PC-9 (cell line): ENCODE measurements at regions of chr2 and their contacts with region 1.

Region 1: GRCh38 chr2:186503848-186504606 is 18.0 kb downstream of the ZC3H15 start:
- DNase-seq: no peak
- H3K4me3 ChIP-seq: no peak overlapping the region
- H3K27ac ChIP-seq: no peak overlapping the region
- H3K4me1 ChIP-seq: no peaks in the 10 kb centered on the region
- H3K27me3 ChIP-seq: no peaks in the 10 kb centered on the region
- CTCF ChIP-seq: peak; percentile 75

Region 2: DNA sequence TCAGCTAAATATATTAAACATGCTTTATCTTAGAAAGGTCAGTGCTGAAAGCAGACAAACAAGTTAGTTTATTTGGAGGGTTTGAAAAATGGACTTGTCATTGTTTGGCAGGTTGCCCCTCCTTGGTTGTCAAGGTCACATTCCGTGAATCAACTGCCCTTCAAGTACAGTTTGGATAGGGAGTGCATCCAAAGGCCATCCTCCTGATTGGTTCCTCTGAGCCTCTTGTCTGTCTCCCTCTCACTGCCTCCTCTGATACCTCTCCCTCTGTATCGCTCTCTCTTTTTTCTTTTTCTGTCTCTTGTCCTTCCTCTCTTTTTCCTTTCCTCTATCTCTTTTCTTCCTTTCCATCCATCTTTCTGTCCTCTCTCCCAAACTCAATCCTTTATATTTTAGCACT is 91.2 kb after region 1 on chr2:
- CTCF ChIA-PET with region 1: no interaction called
- POLR2A ChIA-PET with region 1: no interaction called
- intact Hi-C with region 1: no loop called
- DNase-seq: no peak
- H3K4me3 ChIP-seq: no peak overlapping the region
- H3K27ac ChIP-seq: no peak overlapping the region
- H3K4me1 ChIP-seq: peaks cover 15% of the 10 kb centered on the region
- H3K27me3 ChIP-seq: no peaks in the 10 kb centered on the region
- CTCF ChIP-seq: no peak

Region 3: GRCh38 chr2:186641807-186642321 is 137.8 kb after region 1 on chr2:
- CTCF ChIA-PET with region 1: interaction called, 4 read pairs
- POLR2A ChIA-PET with region 1: interaction called, 4 read pairs
- intact Hi-C with region 1: loop called (anchors 1 kb)
- DNase-seq: peak; percentile 38 to 66
- H3K4me3 ChIP-seq: no peak overlapping the region
- H3K27ac ChIP-seq: 0 out of 2 replicates have a peak overlapping the region, but pooled peaks have one; percentile 22
- H3K4me1 ChIP-seq: no peaks in the 10 kb centered on the region
- H3K27me3 ChIP-seq: no peaks in the 10 kb centered on the region
- CTCF ChIP-seq: peak; percentile 64

Region 4: GRCh38 chr2:186841940-186842339 is 337.9 kb after region 1 on chr2:
- CTCF ChIA-PET with region 1: no interaction called
- POLR2A ChIA-PET with region 1: no interaction called
- intact Hi-C with region 1: no loop called
- DNase-seq: no peak
- H3K4me3 ChIP-seq: no peak overlapping the region
- H3K27ac ChIP-seq: no peak overlapping the region
- H3K4me1 ChIP-seq: no peaks in the 10 kb centered on the region
- H3K27me3 ChIP-seq: no peaks in the 10 kb centered on the region
- CTCF ChIP-seq: no peak